Naive thymus-derived CD4-positive, alpha-beta T cell (primary cell): ENCODE measurements at regions of chr14 and their contacts with region 1.

Region 1: GRCh38 chr14:67695394-67695949 is at the start of gene RDH11:
- DNase-seq: peak; percentile 53 to 89 (median 82)
- ATAC-seq: peak; percentile 97
- H3K4me3 ChIP-seq: peak within 1 kb of the TSS; percentile 88
- H3K4me3 Mint-ChIP-seq: peak within 1 kb of the TSS; percentile 87 to 98 (median 92)
- H3K27ac ChIP-seq: peak within 1 kb of the TSS; percentile 75
- H3K27ac Mint-ChIP-seq: peak within 1 kb of the TSS; percentile 66 to 95 (median 87)
- H3K4me1 ChIP-seq: peaks cover 0 to 3% of the 10 kb centered on the region in 2 donors
- H3K4me1 Mint-ChIP-seq: peaks cover 12 to 32% (median 21%) of the 10 kb centered on the region in 7 donors
- H3K27me3 ChIP-seq: no peaks in the 10 kb centered on the region
- H3K27me3 Mint-ChIP-seq: no peaks in the 10 kb centered on the region
- total RNA-seq, gene RDH11: 22.3 to 44.5 (median 42.6) TPM

Region 2: DNA sequence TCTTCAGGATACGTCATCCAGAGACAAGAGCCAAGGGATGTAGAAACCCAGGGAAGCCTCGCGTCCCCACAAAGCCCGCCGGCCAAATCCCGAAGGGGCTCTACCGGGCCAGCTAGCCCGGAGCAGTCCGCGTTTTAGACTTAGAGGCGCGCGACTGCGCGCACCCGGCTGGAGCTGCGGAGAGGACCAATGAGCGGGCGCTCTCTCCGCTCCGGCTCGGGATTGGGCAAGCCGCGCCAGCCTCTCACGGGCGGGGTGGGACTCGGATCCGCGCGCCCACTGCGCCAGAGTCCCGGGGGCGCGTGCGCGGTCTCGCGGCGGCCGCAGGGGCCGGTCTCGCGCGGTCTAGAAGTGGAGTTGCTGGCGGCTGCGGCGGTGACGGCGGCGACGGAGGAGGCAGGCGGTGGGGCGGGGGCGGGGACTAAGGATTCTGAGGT is 454.5 kb before region 1 on chr14:
- CTCF ChIA-PET with region 1: no interaction called
- POLR2A ChIA-PET with region 1: no interaction called
- intact Hi-C with region 1: loop called in 1 of 2 experiments (anchors 5 kb)
- DNase-seq: peak; percentile 87 to 93 (median 91)
- ATAC-seq: peak; percentile 97
- H3K4me3 ChIP-seq: peak overlapping the region; percentile 84
- H3K4me3 Mint-ChIP-seq: peak overlapping the region; percentile 81 to 95 (median 91)
- H3K27ac ChIP-seq: peak overlapping the region; percentile 74
- H3K27ac Mint-ChIP-seq: peak overlapping the region; percentile 8 to 92 (median 85)
- H3K4me1 ChIP-seq: peaks cover 6 to 10% of the 10 kb centered on the region in 2 donors
- H3K4me1 Mint-ChIP-seq: peaks cover 16 to 37% (median 28%) of the 10 kb centered on the region in 7 donors
- H3K27me3 ChIP-seq: no peaks in the 10 kb centered on the region
- H3K27me3 Mint-ChIP-seq: peaks cover 0 to 33% (median 0%) of the 10 kb centered on the region in 5 donors

Region 3: DNA sequence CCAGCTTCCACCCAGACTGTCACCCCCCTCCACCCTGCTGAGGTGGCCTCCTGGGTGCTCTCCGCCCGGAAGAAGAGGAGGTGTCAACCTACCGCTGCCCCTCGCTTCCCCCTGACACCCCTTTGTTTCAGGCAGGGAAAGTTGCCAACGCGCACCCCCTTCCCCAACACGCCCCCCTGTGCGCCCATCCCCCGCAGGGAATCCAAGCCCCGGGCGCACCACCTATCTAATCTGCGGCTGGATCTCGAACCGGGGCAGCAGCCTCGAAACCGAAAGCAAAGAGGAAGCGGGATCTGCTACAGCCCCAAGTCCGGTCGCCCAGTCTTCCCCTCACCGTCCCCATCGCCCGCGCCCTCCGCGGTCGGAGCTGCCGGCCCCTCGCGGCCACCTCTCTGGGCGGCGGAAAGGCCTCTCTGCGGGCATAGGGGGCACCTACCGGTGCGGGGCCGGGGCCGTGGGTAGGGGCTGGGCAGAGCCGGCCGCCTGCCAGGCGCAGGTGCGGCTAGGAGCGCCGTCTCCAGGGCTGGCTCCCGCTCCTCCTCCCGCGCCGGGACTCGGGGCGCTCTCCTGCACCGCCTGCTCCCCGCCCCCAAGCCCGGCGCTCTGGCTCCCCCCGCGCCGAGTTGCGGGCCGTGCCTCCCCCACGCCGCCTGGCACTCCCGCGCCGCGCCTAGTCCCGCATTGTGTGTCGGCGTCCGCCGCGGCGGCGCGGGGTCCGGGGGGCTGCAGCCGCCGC is 180.7 kb before region 1 on chr14:
- CTCF ChIA-PET with region 1: no interaction called
- POLR2A ChIA-PET with region 1: no interaction called
- intact Hi-C with region 1: loop called in 1 of 2 experiments (anchors 2 kb)
- DNase-seq: peak; percentile 33 to 56 (median 47)
- ATAC-seq: peak; percentile 76
- H3K4me3 ChIP-seq: peak overlapping the region; percentile 68
- H3K4me3 Mint-ChIP-seq: peak overlapping the region; percentile 84 to 95 (median 92)
- H3K27ac ChIP-seq: peak overlapping the region; percentile 73
- H3K27ac Mint-ChIP-seq: peak overlapping the region; percentile 56 to 93 (median 89)
- H3K4me1 ChIP-seq: peaks cover 14 to 21% of the 10 kb centered on the region in 2 donors
- H3K4me1 Mint-ChIP-seq: peaks cover 15 to 35% (median 22%) of the 10 kb centered on the region in 7 donors
- H3K27me3 ChIP-seq: no peaks in the 10 kb centered on the region
- H3K27me3 Mint-ChIP-seq: peaks cover 0 to 82% (median 0%) of the 10 kb centered on the region in 5 donors

Region 4: GRCh38 chr14:67674481-67675169 is 20.8 kb before region 1 on chr14 and contains the start of gene VTI1B:
- CTCF ChIA-PET with region 1: no interaction called
- POLR2A ChIA-PET with region 1: interaction called, 7 read pairs
- intact Hi-C with region 1: loop called (anchors 1 kb)
- DNase-seq: peak; percentile 71 to 84 (median 80)
- ATAC-seq: peak; percentile 95
- H3K4me3 ChIP-seq: peak within 1 kb of the TSS; percentile 65
- H3K4me3 Mint-ChIP-seq: peak within 1 kb of the TSS; percentile 91 to 96 (median 93)
- H3K27ac ChIP-seq: peak within 1 kb of the TSS; percentile 95
- H3K27ac Mint-ChIP-seq: peak within 1 kb of the TSS; percentile 82 to 96 (median 92)
- H3K4me1 ChIP-seq: peaks cover 17 to 21% of the 10 kb centered on the region in 2 donors
- H3K4me1 Mint-ChIP-seq: peaks cover 22 to 62% (median 55%) of the 10 kb centered on the region in 7 donors
- H3K27me3 ChIP-seq: no peaks in the 10 kb centered on the region
- H3K27me3 Mint-ChIP-seq: no peaks in the 10 kb centered on the region
- total RNA-seq, gene VTI1B: 49.2 to 82.4 (median 65.9) TPM